Sciatic nerve (tissue), 2 donors: ENCODE measurements at regions of chr6 and their contacts with region 1.

Region 1: GRCh38 chr6:47465117-47465516 is 12.5 kb upstream of the CD2AP start:
- DNase-seq: no peak
- ATAC-seq: no peak

Region 2: GRCh38 chr6:47203266-47203937 is 261.7 kb before region 1 on chr6:
- intact Hi-C with region 1: no loop called
- DNase-seq: no peak
- ATAC-seq: no peak

Region 3: DNA sequence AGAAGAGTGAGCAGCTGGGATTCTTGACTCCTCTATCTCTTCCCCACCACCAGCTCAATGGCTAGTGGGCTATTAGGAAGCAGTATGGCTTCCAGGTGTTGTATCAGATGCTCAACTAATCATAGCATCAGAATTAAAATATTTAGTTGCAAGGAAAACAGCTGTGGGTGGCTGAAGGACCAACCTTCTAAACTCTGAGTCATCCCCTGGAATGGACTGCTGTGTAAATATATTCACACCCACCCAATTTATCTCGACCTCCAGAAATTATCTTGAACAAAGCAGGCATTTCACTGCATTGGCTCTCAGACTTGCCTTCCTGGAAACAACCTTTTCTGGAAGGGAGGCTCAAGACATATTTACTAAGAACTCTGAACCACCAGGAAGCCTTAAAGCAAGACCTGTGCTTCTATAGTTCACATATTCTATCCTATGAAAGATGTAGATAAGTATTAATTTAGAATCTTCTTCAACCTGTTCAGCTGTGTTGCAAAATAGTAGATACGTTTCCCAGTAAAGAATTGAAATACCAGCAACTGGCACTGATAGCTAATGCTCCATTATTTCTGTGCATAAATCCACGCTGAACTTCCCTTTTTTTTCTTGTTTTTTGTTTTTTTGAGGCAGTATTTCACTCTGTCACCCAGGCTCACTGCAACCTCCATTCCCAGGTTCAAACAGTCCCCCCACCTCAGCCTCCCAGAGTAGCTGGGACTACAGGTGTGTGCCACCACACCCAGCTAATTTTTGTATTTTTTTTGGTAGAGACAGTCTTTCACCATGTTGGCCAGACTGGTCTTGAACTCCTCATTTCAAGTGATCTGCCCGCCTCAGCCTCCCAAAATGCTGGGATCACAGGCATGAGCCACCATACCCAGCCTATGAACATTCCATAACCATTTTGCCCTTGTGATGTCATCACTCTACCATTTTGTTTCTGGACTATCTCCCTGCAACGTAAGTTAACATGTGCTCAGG is 44.4 kb before region 1 on chr6:
- intact Hi-C with region 1: no loop called
- DNase-seq: no peak
- ATAC-seq: no peak

Region 4: GRCh38 chr6:48844696-48845095 is 1379.6 kb after region 1 on chr6:
- intact Hi-C with region 1: loop called (anchors 5 kb)
- DNase-seq: no peak
- ATAC-seq: no peak